ENCODE measurements at regions of chr1 and their contacts with region 1.

Region 1: DNA sequence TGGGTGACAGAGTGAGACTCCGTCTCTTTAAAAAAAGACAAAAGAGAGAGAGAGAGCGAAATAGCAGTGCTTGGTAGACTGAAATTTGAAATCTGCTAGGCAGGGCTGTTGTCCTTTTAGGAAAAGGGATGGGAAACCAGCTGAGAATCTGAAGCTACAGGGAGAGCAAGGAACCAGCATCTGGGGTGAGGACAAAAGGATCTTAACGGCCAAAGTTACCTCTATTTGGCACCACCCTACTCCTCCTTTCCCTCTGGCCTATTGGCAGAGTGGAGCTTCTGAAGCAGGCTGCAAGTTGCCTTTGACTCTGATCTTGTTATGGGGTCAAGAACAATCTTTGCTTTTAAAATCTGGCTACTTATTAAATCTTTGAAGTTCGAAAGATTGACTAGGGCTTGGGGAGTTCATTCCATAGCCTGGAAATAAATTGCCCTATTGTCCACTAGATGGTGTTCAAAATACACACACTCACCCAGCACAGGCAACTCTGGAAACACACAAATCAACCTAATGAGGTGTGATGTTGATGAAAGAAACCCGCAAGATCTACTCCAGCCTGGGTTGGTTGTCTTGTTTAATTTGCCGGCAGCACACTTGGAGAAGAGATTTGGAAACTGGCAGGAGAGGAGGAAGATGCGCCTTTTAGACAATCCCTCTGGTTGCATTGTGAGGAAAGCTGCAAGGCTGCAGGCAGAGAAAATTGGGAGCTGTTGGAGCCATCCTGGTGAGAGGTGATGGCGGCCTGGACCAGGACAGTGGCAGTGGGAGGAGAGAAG is 16.5 kb upstream of the PARP1 start:
- DNase-seq: peak in 1 of 2 experiments; percentile 34
- H3K4me3 ChIP-seq: no peak overlapping the region
- H3K4me3 Mint-ChIP-seq: no peak overlapping the region
- H3K27ac Mint-ChIP-seq: no peak overlapping the region
- H3K4me1 ChIP-seq: no peaks in the 10 kb centered on the region
- H3K4me1 Mint-ChIP-seq: no peaks in the 10 kb centered on the region
- H3K27me3 ChIP-seq: no peaks in the 10 kb centered on the region
- H3K27me3 Mint-ChIP-seq: no peaks in the 10 kb centered on the region
- CTCF ChIP-seq: peak; percentile 69 to 70

Region 2: DNA sequence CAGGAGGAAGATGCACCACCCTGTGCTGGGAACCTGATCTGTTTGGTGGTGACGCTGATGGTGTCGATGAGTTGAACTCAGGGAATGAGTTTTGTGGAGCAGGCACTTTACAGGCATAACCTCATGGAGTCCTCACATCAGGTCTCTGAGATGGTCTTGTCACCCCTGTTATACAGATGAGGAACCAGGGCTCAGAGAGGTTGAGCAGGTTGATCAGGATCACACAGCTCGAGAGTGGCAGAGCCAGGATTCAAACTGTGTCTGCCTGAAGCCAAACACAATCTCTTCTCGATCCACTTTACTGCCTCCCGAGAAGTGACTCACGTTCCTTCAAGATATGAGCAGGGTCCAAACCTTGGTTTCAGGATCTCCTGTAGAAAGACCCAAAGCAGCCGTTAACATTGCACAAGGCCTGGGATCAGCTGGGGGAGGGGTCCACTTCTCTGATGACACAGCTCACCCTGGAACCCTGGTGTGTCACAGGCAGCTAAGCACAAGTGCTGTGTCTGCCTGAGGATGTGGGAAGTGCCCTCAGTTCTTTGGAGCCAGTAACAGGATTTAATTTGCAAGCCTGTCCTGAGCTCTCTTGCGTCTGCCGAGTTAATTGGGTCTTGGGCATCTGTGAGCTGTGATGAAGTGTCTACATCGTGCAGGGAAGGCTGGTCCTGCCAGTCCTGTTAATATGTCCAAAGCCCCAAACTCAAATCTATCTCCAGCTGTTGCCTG is 58.7 kb after region 1 on chr1:
- CTCF ChIA-PET with region 1: interaction called, 3 read pairs
- POLR2A ChIA-PET with region 1: no interaction called
- intact Hi-C with region 1: loop called (anchors 5 kb)
- DNase-seq: no peak
- H3K4me3 ChIP-seq: no peak overlapping the region
- H3K4me3 Mint-ChIP-seq: no peak overlapping the region
- H3K27ac Mint-ChIP-seq: no peak overlapping the region
- H3K4me1 ChIP-seq: peaks cover 31% of the 10 kb centered on the region
- H3K4me1 Mint-ChIP-seq: no peaks in the 10 kb centered on the region
- H3K27me3 ChIP-seq: no peaks in the 10 kb centered on the region
- H3K27me3 Mint-ChIP-seq: no peaks in the 10 kb centered on the region
- CTCF ChIP-seq: no peak

Region 3: GRCh38 chr1:226547754-226548191 is 123.4 kb after region 1 on chr1:
- CTCF ChIA-PET with region 1: interaction called, 10 read pairs
- POLR2A ChIA-PET with region 1: no interaction called
- intact Hi-C with region 1: loop called (anchors 1 kb)
- DNase-seq: peak; percentile 84 to 85
- H3K4me3 ChIP-seq: peak overlapping the region; percentile 40; the same call in 1 of the 2 replicates
- H3K4me3 Mint-ChIP-seq: peak overlapping the region; percentile 63
- H3K27ac Mint-ChIP-seq: no peak overlapping the region
- H3K4me1 ChIP-seq: peaks cover 6% of the 10 kb centered on the region
- H3K4me1 Mint-ChIP-seq: peaks cover 11% of the 10 kb centered on the region
- H3K27me3 ChIP-seq: peaks cover 1% of the 10 kb centered on the region; the same call in 1 of the 2 replicates
- H3K27me3 Mint-ChIP-seq: peaks cover 7% of the 10 kb centered on the region
- CTCF ChIP-seq: peak; percentile 59 to 86

Region 4: GRCh38 chr1:226609836-226610455 is 185.5 kb after region 1 on chr1:
- CTCF ChIA-PET with region 1: interaction called, 4 read pairs
- POLR2A ChIA-PET with region 1: no interaction called
- intact Hi-C with region 1: loop called (anchors 5 kb)
- DNase-seq: no peak
- H3K4me3 ChIP-seq: no peak overlapping the region
- H3K4me3 Mint-ChIP-seq: no peak overlapping the region
- H3K27ac Mint-ChIP-seq: no peak overlapping the region
- H3K4me1 ChIP-seq: peaks cover 23% of the 10 kb centered on the region
- H3K4me1 Mint-ChIP-seq: peaks cover 6% of the 10 kb centered on the region
- H3K27me3 ChIP-seq: no peaks in the 10 kb centered on the region
- H3K27me3 Mint-ChIP-seq: no peaks in the 10 kb centered on the region
- CTCF ChIP-seq: no peak

Region 5: DNA sequence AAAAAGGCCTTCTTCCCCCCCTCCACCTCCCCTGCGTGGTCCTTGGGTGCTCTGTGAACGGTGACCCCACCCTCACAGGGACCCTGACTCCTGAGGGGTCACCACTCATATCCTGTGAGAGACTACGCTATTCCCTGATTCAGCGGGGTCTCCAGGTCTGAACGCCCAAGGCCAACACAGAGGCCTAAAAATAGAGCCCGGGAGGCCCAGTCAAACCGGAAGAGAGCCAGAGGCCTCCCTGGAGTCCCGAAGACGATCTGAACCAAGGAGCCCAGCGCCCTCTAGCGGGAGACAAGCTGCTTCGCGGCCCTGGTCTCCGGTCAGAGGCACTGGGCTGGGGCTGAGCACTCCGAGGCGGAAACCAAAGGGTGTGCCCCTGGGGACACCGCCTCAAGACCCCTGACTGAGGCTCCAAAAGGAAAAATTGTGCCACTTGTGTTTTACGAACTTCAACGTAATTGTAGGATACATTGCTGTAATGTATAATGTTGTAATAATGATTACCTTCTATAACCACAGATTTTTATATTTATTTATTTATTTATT is 403.6 kb after region 1 on chr1:
- CTCF ChIA-PET with region 1: no interaction called
- POLR2A ChIA-PET with region 1: no interaction called
- intact Hi-C with region 1: loop called (anchors 2 kb)
- DNase-seq: peak; percentile 90
- H3K4me3 ChIP-seq: no peak overlapping the region
- H3K4me3 Mint-ChIP-seq: no peak overlapping the region
- H3K27ac Mint-ChIP-seq: no peak overlapping the region
- H3K4me1 ChIP-seq: no peaks in the 10 kb centered on the region
- H3K4me1 Mint-ChIP-seq: no peaks in the 10 kb centered on the region
- H3K27me3 ChIP-seq: no peaks in the 10 kb centered on the region
- H3K27me3 Mint-ChIP-seq: no peaks in the 10 kb centered on the region
- CTCF ChIP-seq: peak; percentile 78 to 81

Measured in Caco-2 (cell line).